Posterior cingulate gyrus (tissue), 11 donors: ENCODE measurements at regions of chr17 and their contacts with region 1.

Region 1: GRCh38 chr17:27455914-27456680 is at the start of gene KSR1:
- DNase-seq: peak; percentile 62 to 96 (median 79)

Region 2: GRCh38 chr17:27217631-27218030 is 238.5 kb before region 1 on chr17:
- intact Hi-C with region 1: no loop called
- DNase-seq: no peak

Region 3: DNA sequence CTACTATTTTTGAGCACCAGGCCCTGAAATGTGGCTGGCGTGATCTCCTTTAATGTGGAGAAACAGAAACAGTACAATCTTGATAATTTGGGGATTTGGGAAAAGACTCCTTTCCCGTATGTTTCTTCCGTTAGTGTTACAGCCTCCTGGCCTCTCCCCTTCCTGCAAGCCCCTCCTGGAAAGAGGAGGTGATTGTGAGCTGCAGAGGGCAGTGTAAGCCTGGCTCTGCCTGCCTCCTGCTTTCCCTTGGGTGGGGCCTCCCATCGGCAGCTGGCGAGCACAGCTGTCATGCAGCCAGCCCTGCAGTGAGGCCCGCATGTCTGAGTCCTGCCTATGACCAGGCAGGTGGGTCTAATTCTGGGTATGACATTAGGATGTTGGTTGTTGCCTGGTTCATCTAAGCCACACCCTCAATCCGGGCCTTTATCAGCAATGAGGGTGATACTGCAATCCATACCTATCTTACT is 210.8 kb before region 1 on chr17:
- intact Hi-C with region 1: loop called (anchors 10 kb)
- DNase-seq: peak; percentile 61 to 97 (median 82)

Region 4: DNA sequence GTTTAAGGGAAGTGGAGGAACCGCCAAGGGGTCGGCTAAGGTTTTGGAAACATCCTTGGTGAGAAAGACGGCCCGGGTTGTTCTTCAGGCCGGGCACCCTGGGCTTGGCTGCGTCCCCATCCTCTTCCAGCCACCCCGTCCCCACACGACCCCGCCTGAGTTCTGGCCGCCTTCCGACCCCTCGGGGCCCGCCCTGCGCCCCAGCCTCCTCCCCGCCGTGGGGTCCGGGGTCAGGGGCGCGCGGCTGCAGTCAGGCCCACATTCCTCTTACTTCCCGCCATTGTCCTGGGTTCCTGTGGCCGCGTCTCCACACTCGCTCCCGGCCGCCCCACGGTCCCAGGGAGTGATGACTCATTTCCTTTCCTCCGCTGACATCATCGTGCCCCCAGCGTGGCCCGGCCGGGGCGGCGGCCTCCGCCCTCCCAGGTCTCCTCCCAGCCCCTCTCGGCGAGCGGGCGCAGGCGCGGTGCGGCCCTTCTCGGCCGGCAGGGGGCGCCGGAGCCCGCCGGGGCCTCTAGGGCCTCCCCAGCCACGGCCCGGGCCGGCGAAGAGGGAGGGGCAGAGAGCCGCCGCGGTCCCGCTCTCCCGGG is 102.5 kb before region 1 on chr17:
- intact Hi-C with region 1: loop called (anchors 2 kb)
- DNase-seq: peak; percentile 50 to 96 (median 75)

Region 5: DNA sequence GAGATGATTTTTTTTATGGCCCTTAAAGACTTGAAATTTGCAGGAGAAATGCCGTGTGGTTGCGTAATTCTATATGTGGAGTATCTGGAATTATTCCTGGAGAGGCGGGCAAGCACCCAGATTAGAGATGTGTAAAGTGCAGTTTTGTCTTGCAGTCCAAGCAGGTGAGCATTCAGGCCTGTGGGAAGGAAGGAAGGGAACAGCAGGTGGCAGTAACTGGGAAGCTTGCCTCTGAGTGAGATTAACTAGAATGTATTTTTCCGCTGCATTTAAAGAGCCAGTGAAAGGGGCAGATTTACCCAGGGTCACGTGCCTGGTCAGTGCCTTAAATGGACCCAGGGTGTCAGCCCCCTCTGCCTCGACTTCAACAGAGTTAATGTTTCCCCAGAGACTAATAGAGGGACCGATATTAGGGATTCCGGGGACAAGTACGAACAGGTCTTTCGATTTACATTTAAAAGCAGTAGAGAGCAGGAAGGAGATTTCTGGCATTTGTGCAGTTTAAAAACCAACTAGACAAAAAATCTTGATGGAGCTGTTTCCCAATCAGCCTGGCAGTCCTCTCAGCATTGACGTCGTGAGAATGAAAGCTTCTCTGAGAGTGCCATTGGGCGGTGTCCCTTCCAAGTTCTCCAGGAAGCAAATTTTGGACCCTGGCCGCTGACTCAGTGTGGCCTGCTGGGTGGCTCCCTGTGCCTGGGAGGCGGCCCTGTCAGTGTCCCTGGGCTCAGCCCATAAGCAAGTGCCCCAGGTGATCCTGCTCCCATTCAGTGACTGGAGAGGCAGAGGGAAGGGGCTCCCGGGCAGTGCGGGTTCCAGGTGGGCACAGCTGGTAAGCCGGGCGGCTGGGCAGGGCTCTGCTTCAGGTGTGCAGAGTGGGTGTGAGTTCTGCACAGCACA is 38.3 kb after region 1 on chr17:
- intact Hi-C with region 1: loop called (anchors 5 kb)
- DNase-seq: peak in 8 of 10 donors; percentile 20 to 89 (median 52)

Region 6: DNA sequence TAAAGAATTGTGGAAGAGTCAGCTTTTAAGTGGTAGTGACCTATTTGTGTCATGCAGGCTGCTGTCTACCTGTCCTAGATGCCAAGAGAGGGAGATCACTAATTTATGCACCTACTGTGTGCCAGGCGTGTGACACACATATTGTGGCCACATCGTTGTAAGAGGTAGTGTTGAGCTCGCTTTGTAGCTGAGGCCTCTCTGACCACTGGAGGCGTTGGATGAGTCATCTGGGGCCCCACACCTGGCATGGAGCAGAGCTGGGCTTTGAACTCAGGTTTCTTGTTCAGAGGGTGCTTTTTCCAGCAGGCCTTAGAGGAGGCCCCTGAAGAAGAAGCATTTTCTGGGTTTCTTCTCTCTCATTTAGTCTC is 122.6 kb after region 1 on chr17:
- intact Hi-C with region 1: loop called (anchors 5 kb)
- DNase-seq: no peak